H1 (cell line): ENCODE measurements at regions of chr4 and their contacts with region 1.

Region 1: DNA sequence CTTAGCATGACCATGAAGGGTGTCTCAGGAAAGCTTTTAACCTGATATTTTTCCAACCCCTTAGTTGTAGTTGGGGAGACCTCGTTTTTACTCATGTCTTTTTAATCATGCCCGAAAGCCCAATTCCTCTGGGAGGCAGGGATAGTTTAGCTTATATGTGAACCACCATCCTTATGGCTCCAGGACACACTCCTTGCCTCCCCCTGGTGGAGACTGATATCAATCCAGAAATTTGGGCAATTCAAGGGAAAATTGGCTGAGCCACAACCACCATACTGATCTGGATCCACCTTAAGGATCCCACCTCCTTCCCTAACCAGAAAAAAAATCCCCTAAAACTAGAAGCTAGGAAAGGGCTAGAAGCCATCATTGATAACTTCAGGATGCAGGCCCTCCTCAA is 13.4 kb upstream of the COL25A1 start:
- DNase-seq: no peak
- H3K4me3 ChIP-seq: no peak overlapping the region
- H3K27ac ChIP-seq: no peak overlapping the region
- H3K4me1 ChIP-seq: no peaks in the 10 kb centered on the region
- H3K27me3 ChIP-seq: no peaks in the 10 kb centered on the region
- CTCF ChIP-seq: peak in 2 of 3 experiments; percentile 25 to 39; a peak in 2 of 4 replicates
- EP300 ChIP-seq: no peak
- POLR2A ChIP-seq: no peak
- RAD21 ChIP-seq: peak; percentile 47 to 55

Region 2: DNA sequence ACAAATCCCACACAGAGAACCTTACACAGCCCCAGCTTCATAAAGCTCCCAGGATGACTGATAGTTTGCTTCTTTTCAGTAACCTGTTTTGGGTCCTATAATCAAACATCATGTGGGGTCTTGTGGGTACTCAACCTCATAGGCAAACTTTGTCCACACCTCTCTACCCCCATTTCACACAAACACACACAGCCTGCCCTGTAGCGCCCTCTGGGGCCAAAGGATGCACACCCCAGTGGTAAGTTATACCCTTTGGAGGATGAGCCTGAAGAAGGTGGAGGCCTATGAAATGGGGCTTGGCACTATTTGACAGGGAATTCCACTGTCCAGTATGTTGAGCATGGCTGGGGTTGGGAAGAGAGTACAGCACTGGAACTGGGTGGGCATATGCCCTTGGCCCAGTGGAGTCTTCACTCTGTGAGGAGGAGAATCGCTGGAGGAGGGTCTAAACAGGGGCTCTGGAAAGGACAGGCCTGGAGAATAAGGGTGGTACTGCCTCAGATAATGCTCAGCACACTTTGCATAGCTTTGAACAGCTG is 17.2 kb after region 1 on chr4:
- CTCF ChIA-PET with region 1: interaction called, 12 read pairs
- POLR2A ChIA-PET with region 1: no interaction called
- DNase-seq: peak; percentile 13 to 86
- H3K4me3 ChIP-seq: no peak overlapping the region
- H3K27ac ChIP-seq: no peak overlapping the region
- H3K4me1 ChIP-seq: no peaks in the 10 kb centered on the region
- H3K27me3 ChIP-seq: no peaks in the 10 kb centered on the region
- CTCF ChIP-seq: peak; percentile 87 to 92 (median 87)
- EP300 ChIP-seq: no peak
- POLR2A ChIP-seq: no peak
- RAD21 ChIP-seq: peak; percentile 93 to 96